MCF 10A (cell line): ENCODE measurements at regions of chr18 and their contacts with region 1.

Region 1: DNA sequence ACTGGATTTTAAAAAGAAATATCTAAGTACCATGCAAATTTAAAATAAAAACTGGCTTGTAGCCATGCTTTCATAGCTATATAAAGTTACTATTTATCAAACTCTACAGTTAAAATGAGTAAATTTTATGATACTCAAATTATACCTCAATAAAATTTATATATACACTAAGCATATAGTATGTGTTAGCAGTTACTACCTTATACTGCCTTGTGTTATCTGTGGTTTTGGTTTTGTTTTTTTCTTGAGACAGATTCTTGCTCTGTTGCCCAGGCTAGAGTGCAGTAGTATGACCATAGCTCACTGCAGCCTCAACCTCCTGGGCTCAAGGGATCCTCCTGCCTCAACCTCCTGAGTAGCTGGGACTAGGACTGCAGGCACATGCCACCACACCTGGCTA is 342.1 kb downstream of the KIAA1328 start:
- DNase-seq: no peak
- H3K4me3 Mint-ChIP-seq: no peak overlapping the region
- H3K27ac Mint-ChIP-seq: no peak overlapping the region
- H3K4me1 Mint-ChIP-seq: no peaks in the 10 kb centered on the region
- H3K27me3 Mint-ChIP-seq: no peaks in the 10 kb centered on the region
- CTCF ChIP-seq: no peak

Region 2: DNA sequence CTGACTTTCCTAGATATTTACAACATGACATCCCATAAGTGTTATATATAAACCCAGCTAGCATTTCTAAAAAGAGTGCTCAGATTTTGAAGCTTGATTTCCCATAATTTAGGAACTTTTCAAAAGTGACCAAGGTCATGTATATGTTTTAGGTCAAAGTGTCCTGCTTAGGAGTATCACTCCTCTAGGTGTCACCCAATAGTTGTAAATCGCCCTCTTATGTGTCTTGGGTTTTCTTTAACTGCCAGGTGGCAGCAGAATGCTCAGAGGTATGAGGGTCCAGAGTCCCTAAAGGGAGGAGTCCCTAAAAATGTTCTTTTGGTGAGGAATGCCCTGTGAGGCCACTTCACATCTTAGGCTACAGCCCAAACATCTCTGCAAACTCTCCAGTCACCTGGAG is 36.4 kb after region 1 on chr18:
- CTCF ChIA-PET with region 1: no interaction called
- POLR2A ChIA-PET with region 1: no interaction called
- intact Hi-C with region 1: loop called (anchors 2 kb)
- DNase-seq: no peak
- H3K4me3 Mint-ChIP-seq: no peak overlapping the region
- H3K27ac Mint-ChIP-seq: no peak overlapping the region
- H3K4me1 Mint-ChIP-seq: no peaks in the 10 kb centered on the region
- H3K27me3 Mint-ChIP-seq: no peaks in the 10 kb centered on the region
- CTCF ChIP-seq: no peak

Region 3: GRCh38 chr18:37270038-37270665 is 99.2 kb after region 1 on chr18:
- CTCF ChIA-PET with region 1: no interaction called
- POLR2A ChIA-PET with region 1: no interaction called
- intact Hi-C with region 1: no loop called
- DNase-seq: peak; percentile 57
- H3K4me3 Mint-ChIP-seq: no peak overlapping the region
- H3K27ac Mint-ChIP-seq: no peak overlapping the region
- H3K4me1 Mint-ChIP-seq: no peaks in the 10 kb centered on the region
- H3K27me3 Mint-ChIP-seq: no peaks in the 10 kb centered on the region
- CTCF ChIP-seq: no peak